Activated naive CD4-positive, alpha-beta T cell treated with anti-CD3 and anti-CD28 coated beads for 36 hours (primary cell): ENCODE measurements at regions of chr12 and their contacts with region 1.

Region 1: GRCh38 chr12:6062757-6063735 is 61.4 kb downstream of the VWF start:
- DNase-seq: peak; percentile 68
- H3K4me3 Mint-ChIP-seq: no peak overlapping the region
- H3K27ac Mint-ChIP-seq: no peak overlapping the region
- H3K4me1 Mint-ChIP-seq: no peaks in the 10 kb centered on the region
- H3K27me3 Mint-ChIP-seq: no peaks in the 10 kb centered on the region

Region 2: DNA sequence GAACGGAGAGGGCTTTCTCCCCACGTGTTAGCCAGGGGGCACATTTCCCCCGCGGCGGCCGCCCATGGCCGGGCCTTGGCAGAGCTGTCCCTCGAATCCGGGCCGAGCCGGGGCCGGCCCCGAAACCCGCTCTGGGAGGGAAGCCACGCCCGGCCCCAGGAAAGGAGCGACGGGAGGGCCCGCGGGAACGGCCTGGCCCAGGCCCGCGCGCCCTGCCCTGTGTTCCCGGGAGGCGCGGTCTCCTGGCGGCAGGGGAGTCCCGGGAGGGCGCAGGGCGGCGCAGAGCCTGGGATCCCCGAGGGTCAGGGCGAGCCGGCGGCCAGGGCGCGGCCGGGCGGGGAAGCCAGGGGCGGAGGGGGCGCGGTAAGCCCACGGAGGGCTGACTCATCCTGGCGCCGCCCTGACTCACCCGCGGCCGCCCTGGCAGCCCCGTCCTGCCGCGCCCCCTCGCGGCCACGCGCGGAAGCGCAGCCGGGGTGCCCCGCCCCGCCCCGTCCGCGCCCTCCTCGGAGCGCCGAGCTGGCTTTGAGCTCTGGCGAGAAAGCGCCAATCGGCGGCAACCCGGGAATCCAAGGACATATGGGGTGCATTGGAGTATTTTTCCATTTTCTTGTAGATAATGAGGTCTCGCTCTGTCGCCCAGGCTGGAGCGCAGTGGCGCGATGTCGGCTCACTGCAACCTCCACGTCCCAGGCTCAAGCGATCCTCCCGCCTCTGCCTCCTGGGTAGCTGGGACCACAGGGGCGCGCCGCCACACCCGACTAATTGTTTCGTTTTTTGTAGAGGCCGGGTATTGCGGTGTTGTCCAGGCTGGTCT is 215.6 kb after region 1 on chr12:
- CTCF ChIA-PET with region 1: interaction called, 13 read pairs
- intact Hi-C with region 1: loop called (anchors 1 kb)
- DNase-seq: peak; percentile 80
- H3K4me3 Mint-ChIP-seq: peak overlapping the region; percentile 75
- H3K27ac Mint-ChIP-seq: peak overlapping the region; percentile 71
- H3K4me1 Mint-ChIP-seq: peaks cover 6% of the 10 kb centered on the region
- H3K27me3 Mint-ChIP-seq: peaks cover 17% of the 10 kb centered on the region

Region 3: DNA sequence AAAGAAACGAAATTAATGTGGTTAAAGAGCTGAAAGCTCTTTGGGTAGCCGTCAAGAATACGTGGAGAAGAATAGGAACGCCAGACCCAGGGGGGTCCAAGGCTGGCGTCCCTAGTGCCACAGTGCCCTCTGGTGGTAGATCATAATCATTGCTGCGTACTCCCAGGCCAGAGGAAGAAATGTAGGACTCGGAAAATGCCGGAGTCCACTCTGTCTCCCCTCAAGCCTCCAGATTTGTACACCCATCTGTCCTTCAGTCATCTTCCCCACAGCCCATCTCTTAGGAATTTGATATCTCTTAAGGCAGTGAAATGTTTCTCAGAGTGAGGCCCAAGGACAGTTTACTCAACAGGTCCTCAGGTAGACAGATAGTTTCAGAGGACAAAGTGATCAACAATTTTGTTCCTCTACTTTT is 222.0 kb after region 1 on chr12:
- CTCF ChIA-PET with region 1: interaction called, 13 read pairs
- intact Hi-C with region 1: loop called (anchors 1 kb)
- DNase-seq: peak; percentile 70
- H3K4me3 Mint-ChIP-seq: no peak overlapping the region
- H3K27ac Mint-ChIP-seq: no peak overlapping the region
- H3K4me1 Mint-ChIP-seq: no peaks in the 10 kb centered on the region
- H3K27me3 Mint-ChIP-seq: peaks cover 3% of the 10 kb centered on the region